Activated CD4-positive, alpha-beta memory T cell treated with anti-CD3 and anti-CD28 coated beads for 36 hours (primary cell): ENCODE measurements at regions of chr7 and their contacts with region 1.

Region 1: DNA sequence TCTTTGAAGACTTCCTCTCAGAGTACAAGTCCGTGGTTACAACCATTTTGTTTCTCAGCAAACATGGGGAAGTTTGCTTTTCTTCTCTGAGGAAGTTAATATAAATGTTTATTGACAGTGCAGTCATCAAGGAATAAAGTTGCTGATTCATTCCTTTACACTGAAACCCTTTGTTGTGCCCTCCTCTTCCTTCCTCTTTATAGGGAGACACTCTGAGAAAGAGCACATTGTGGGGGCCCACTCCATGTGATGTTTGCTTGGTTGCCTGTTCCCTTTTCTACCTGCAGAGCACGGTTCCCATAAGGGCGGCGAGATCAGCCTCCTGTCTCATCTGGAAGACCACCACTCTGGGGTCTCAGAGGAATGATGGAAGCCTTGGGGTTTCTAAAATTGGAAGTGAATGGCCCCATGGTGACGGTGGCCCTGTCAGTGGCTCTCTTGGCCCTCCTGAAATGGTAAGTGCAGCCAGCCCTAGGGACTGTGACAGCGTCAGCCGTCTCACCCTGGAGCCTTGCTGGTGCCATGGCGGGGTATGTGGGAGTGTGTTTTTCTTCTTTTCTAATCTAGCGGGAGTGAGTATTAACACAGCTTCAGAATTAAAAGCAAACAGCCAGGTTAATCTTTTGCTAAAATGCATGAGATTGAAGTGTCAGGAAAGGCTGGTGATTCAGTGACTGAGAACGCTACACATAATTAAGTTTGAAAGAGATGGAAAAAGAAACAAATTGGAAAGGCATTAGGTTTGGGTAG is at the start of gene TBXAS1:
- DNase-seq: peak; percentile 36
- H3K4me3 Mint-ChIP-seq: peak within 1 kb of the TSS; percentile 73
- H3K27ac Mint-ChIP-seq: peak within 1 kb of the TSS; percentile 88
- H3K4me1 Mint-ChIP-seq: peaks cover 28% of the 10 kb centered on the region
- H3K27me3 Mint-ChIP-seq: peaks cover 4% of the 10 kb centered on the region
- total RNA-seq, gene TBXAS1: 4.8 to 5.3 TPM

Region 2: DNA sequence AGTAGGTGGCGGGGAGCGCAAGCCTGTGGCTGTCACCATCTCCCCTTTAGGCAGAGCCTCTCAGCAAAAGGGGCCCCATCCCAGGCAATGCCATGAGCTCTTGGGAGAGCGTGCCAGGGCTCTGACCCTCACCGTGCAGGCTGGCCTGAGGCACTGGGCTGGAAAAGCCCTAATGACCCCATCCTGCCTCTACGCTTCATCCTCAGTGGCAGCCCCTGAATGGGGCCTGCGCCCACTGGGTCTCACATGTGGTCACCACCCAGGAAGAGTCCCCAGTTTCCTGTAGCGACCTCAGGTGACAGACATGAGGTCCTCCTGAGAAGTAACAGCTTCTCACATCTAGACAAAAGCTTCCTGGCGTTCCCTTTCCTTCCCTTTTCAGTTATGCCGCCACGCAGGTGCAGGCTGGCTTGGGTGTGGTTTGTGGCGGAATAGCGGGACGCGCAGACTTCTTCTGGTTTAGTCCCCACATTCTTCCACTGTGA is 246.5 kb before region 1 on chr7:
- CTCF ChIA-PET with region 1: no interaction called
- POLR2A ChIA-PET with region 1: no interaction called
- intact Hi-C with region 1: no loop called
- DNase-seq: no peak
- H3K4me3 Mint-ChIP-seq: no peak overlapping the region
- H3K27ac Mint-ChIP-seq: no peak overlapping the region
- H3K4me1 Mint-ChIP-seq: no peaks in the 10 kb centered on the region
- H3K27me3 Mint-ChIP-seq: no peaks in the 10 kb centered on the region

Region 3: DNA sequence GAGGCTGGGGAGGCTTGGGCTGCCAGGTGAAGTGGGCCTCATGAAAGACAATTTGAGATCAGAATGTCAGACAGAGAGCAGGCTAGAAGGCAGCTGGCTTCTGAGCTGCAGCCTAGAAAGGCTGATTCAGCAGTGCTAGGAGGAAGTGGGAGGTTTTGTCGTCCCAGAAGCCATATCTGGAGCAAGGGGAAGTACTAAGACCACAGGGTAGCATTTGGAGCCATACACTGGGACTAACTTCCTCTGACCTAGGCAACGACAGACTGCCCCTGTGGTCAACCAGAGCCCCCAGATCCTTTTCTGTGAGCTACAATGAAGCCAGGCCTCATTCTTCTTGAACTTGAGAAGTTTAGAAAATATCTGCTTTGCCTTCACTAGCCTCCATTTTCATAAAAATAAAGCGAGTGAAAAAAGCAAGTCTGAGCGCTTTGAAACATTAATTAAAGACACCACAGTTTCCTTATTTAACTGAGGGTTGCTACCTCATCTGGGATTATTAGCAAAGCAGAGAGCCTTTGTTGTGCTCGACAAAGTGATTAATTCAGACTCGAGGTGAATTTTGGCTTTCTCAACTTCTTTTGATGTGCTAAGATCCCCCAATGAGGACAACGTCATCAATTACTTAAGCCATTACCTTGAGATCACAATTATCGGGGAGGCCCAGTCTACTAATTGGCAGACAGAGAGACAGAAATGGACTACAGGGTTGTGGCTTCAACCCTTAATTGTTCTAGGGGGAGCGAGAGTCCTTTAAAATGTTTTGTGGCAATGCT is 26.5 kb after region 1 on chr7:
- CTCF ChIA-PET with region 1: no interaction called
- POLR2A ChIA-PET with region 1: no interaction called
- intact Hi-C with region 1: loop called (anchors 2 kb)
- DNase-seq: peak; percentile 45
- H3K4me3 Mint-ChIP-seq: no peak overlapping the region
- H3K27ac Mint-ChIP-seq: peak overlapping the region; percentile 69
- H3K4me1 Mint-ChIP-seq: peaks cover 25% of the 10 kb centered on the region
- H3K27me3 Mint-ChIP-seq: no peaks in the 10 kb centered on the region

Region 4: GRCh38 chr7:139875821-139876241 is 46.6 kb after region 1 on chr7:
- CTCF ChIA-PET with region 1: no interaction called
- POLR2A ChIA-PET with region 1: no interaction called
- intact Hi-C with region 1: loop called (anchors 5 kb)
- DNase-seq: no peak
- H3K4me3 Mint-ChIP-seq: no peak overlapping the region
- H3K27ac Mint-ChIP-seq: no peak overlapping the region
- H3K4me1 Mint-ChIP-seq: peaks cover 10% of the 10 kb centered on the region
- H3K27me3 Mint-ChIP-seq: no peaks in the 10 kb centered on the region